ENCODE measurements at regions of chr6 and their contacts with region 1.

Region 1: GRCh38 chr6:3251462-3252314 is 7.1 kb upstream of the PSMG4 start:
- DNase-seq: peak; percentile 30
- ATAC-seq: peak; percentile 98
- H3K4me3 ChIP-seq: no peak overlapping the region
- H3K27ac ChIP-seq: no peak overlapping the region
- H3K4me1 ChIP-seq: no peaks in the 10 kb centered on the region
- H3K27me3 ChIP-seq: peaks cover 0 to 6% of the 10 kb centered on the region in 2 experiments; a peak in 3 of 4 replicates
- CTCF ChIP-seq: peak; percentile 91 to 98 (median 98)
- EP300 ChIP-seq: no peak
- POLR2A ChIP-seq: no peak
- RAD21 ChIP-seq: peak; percentile 89

Region 2: DNA sequence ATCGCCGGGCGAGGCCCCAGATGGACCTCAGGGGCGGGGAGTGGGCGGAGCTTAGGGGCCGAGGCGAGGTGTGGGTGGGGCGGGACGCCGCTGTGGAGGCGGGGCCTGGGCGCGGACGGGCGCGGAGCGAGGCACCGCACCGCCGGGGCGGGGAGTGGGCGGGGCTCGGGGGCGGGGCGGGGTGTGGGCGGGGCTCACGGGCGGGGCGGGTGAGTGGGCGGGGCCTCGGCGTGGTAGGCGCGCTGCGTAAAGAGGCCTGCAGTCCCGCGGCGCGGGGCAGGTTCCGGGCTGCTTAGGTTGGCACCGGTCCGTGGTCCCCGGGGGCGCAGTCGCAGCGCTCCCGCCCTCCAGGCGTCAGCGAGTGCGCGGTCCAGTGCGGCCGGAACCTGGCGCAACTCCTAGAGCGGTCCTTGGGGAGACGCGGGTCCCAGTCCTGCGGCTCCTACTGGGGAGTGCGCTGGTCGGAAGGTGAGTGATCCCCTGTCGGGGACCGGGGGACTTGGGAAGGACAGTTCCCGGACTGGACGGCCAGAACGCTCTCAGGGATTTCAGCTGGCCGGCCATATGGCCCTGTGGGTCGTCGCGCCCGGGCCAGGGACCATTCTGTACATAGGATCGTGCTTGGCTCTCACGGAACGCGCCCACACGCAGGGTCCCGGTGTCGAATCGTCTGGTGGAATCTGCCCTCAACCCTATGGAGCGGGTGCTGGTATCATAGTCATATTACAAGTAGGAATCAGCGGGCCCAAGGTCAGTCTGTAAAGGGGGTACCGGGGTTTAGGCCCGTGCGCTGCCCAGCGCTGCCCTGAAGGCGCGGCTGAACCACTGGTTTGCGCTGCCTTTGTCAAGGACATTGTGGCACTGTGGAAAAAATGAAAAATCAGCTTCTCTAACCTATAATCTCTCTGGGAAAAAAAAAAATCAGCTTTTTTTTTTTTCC is 251.8 kb before region 1 on chr6 and contains the start of gene NQO2:
- CTCF ChIA-PET with region 1: no interaction called
- POLR2A ChIA-PET with region 1: interaction called, 3 read pairs
- RAD21 ChIA-PET with region 1: no interaction called
- SMC1A ChIA-PET with region 1: no interaction called
- in situ Hi-C with region 1: no loop called
- intact Hi-C with region 1: loop called (anchors 5 kb)
- DNase-seq: peak; percentile 13
- ATAC-seq: peak; percentile 92
- H3K4me3 ChIP-seq: peak within 1 kb of the TSS; percentile 87
- H3K27ac ChIP-seq: no peak within 1 kb of the TSS; the same call in 1 of the 2 replicates
- H3K4me1 ChIP-seq: peaks cover 12% of the 10 kb centered on the region
- H3K27me3 ChIP-seq: no peaks in the 10 kb centered on the region
- CTCF ChIP-seq: no peak
- EP300 ChIP-seq: no peak
- POLR2A ChIP-seq: peak; percentile 87
- RAD21 ChIP-seq: no peak
- polyA plus RNA-seq, gene NQO2: 0.55 to 0.66 TPM

Region 3: GRCh38 chr6:3124667-3125066 is 127.0 kb before region 1 on chr6:
- CTCF ChIA-PET with region 1: interaction called, 61 read pairs
- POLR2A ChIA-PET with region 1: interaction called, 4 read pairs
- RAD21 ChIA-PET with region 1: interaction called, 11 read pairs
- SMC1A ChIA-PET with region 1: interaction called, 32 read pairs
- in situ Hi-C with region 1: loop called (anchors 5 kb)
- intact Hi-C with region 1: loop called (anchors 1 kb)
- DNase-seq: no peak
- ATAC-seq: no peak
- H3K4me3 ChIP-seq: no peak overlapping the region
- H3K27ac ChIP-seq: no peak overlapping the region
- H3K4me1 ChIP-seq: peaks cover 7% of the 10 kb centered on the region
- H3K27me3 ChIP-seq: no peaks in the 10 kb centered on the region
- CTCF ChIP-seq: no peak
- EP300 ChIP-seq: no peak
- POLR2A ChIP-seq: no peak
- RAD21 ChIP-seq: no peak

Region 4: DNA sequence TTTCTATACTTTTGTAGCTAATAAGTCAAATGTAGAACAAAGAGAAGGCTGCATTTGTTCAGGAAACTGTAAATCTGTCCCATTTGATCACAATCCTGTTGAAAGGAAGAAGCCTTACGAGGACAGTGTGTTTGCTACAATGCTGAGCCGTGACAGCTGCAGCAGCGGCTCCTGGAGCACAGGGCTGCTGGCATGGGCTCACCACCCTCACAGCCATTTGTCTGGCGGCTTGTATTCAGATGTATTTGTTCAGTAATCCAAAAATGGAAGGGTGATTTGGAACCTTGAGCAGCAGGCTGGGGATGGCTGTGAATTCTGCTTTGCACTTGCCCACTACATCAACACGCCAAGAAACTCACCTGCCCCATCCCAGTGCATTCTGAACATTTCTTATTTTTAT is 100.0 kb before region 1 on chr6:
- CTCF ChIA-PET with region 1: interaction called, 19 read pairs
- POLR2A ChIA-PET with region 1: no interaction called
- RAD21 ChIA-PET with region 1: interaction called, 3 read pairs
- SMC1A ChIA-PET with region 1: no interaction called
- in situ Hi-C with region 1: no loop called
- intact Hi-C with region 1: no loop called
- DNase-seq: no peak
- ATAC-seq: no peak
- H3K4me3 ChIP-seq: no peak overlapping the region
- H3K27ac ChIP-seq: no peak overlapping the region
- H3K4me1 ChIP-seq: no peaks in the 10 kb centered on the region
- H3K27me3 ChIP-seq: no peaks in the 10 kb centered on the region
- CTCF ChIP-seq: no peak
- EP300 ChIP-seq: no peak
- POLR2A ChIP-seq: no peak
- RAD21 ChIP-seq: no peak

Region 5: DNA sequence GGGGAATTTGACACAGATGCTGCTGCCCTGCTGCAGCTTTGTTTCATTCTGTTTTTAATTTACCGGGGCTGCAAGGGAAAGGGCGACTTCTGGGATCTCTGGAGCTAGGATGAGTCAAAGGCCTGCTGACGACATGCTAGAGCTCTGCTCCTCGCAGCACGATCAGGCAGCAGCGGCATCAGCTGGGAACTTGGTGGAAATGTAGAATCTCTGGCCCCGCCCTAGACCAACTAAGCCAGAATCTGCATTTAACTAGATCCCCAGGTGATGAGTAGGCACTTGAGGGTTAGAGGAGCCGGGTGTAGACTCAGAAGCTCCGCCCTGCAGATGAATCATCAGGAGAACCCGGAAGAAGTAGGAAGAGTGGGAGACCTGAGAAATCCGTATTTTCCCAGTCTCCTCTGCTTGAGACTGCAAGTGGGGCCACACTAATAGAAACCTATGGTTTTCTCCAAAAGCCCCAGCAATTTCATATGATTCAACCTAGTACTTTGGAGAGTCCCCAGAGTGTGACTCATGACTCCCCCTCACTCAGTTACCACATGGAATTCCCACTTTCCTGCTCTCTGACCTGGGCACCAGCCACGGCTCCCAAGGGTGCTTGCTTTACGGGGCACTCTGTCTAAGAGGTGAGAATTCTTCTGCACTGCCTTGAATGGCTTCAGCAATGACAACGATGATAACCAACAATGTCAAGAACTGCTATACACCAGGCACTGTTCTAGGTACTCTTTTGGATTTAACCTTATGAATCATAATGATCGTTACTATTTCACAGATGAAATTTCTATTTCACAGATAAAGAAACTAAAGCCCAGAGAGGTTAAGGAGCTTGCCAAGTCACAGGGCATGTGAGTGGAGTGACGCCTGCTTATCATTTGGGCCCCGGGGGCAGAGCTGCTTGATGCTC is 42.3 kb before region 1 on chr6:
- CTCF ChIA-PET with region 1: interaction called, 13 read pairs
- POLR2A ChIA-PET with region 1: no interaction called
- RAD21 ChIA-PET with region 1: interaction called, 17 read pairs
- SMC1A ChIA-PET with region 1: interaction called, 10 read pairs
- in situ Hi-C with region 1: no loop called
- intact Hi-C with region 1: no loop called
- DNase-seq: peak; percentile 60
- ATAC-seq: peak; percentile 78
- H3K4me3 ChIP-seq: no peak overlapping the region
- H3K27ac ChIP-seq: peak overlapping the region; percentile 71
- H3K4me1 ChIP-seq: peaks cover 44% of the 10 kb centered on the region
- H3K27me3 ChIP-seq: no peaks in the 10 kb centered on the region
- CTCF ChIP-seq: peak in 1 of 3 experiments; percentile 30; a peak in 2 of 6 replicates
- EP300 ChIP-seq: peak; percentile 46 to 71; a peak in 2 of 4 replicates
- POLR2A ChIP-seq: no peak
- RAD21 ChIP-seq: peak; percentile 39

Region 6: GRCh38 chr6:3732345-3733141 is 480.9 kb after region 1 on chr6:
- CTCF ChIA-PET with region 1: interaction called, 14 read pairs
- POLR2A ChIA-PET with region 1: no interaction called
- RAD21 ChIA-PET with region 1: interaction called, 7 read pairs
- SMC1A ChIA-PET with region 1: interaction called, 6 read pairs
- in situ Hi-C with region 1: no loop called
- intact Hi-C with region 1: no loop called
- DNase-seq: no peak
- ATAC-seq: peak; percentile 96
- H3K4me3 ChIP-seq: no peak overlapping the region
- H3K27ac ChIP-seq: no peak overlapping the region
- H3K4me1 ChIP-seq: no peaks in the 10 kb centered on the region
- H3K27me3 ChIP-seq: no peaks in the 10 kb centered on the region
- CTCF ChIP-seq: peak; percentile 91 to 95 (median 91)
- EP300 ChIP-seq: no peak
- POLR2A ChIP-seq: no peak
- RAD21 ChIP-seq: peak; percentile 92

Region 7: DNA sequence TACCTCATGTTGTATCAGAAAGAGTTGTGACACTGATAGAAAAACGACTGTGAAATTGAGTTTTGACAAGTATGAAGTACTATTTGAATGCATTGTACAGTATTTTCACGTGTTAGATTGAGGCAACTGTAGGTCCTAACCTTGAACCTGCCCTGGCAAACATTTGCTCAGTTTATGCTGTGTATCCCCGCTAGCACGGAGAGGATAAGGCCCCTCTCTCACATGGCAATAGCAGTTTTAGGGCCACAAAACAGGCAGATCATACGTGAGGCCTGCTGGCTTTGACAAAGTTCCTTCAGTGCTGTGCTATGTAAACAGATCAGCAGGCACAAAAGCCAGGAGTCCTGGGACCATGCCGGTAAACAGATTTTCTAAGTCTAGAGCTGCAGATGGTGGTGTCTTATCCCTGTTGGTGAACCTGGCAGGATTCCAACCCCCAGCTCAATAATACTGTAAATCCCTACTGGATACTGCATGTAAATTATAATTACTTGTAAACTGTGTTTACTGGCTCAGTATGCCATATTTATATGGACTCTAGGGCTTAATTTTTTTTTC is 851.1 kb after region 1 on chr6:
- CTCF ChIA-PET with region 1: no interaction called
- POLR2A ChIA-PET with region 1: no interaction called
- RAD21 ChIA-PET with region 1: no interaction called
- SMC1A ChIA-PET with region 1: no interaction called
- in situ Hi-C with region 1: no loop called
- intact Hi-C with region 1: no loop called
- DNase-seq: no peak
- ATAC-seq: no peak
- H3K4me3 ChIP-seq: no peak overlapping the region
- H3K27ac ChIP-seq: no peak overlapping the region
- H3K4me1 ChIP-seq: no peaks in the 10 kb centered on the region
- H3K27me3 ChIP-seq: no peaks in the 10 kb centered on the region; a peak in 1 of 4 replicates
- CTCF ChIP-seq: no peak
- EP300 ChIP-seq: no peak
- POLR2A ChIP-seq: no peak
- RAD21 ChIP-seq: no peak